Sciatic nerve (tissue), 2 donors: ENCODE measurements at regions of chr4 and their contacts with region 1.

Region 1: GRCh38 chr4:123198706-123199105 is 197.9 kb upstream of the SPRY1 start:
- DNase-seq: no peak
- ATAC-seq: no peak

Region 2: GRCh38 chr4:122334828-122335227 is 863.9 kb before region 1 on chr4:
- intact Hi-C with region 1: loop called (anchors 5 kb)
- DNase-seq: no peak
- ATAC-seq: no peak

Region 3: GRCh38 chr4:122617597-122618593 is 580.8 kb before region 1 on chr4:
- intact Hi-C with region 1: no loop called
- DNase-seq: no peak
- ATAC-seq: no peak

Region 4: GRCh38 chr4:122963216-122963615 is 235.5 kb before region 1 on chr4:
- intact Hi-C with region 1: no loop called
- DNase-seq: no peak
- ATAC-seq: no peak

Region 5: DNA sequence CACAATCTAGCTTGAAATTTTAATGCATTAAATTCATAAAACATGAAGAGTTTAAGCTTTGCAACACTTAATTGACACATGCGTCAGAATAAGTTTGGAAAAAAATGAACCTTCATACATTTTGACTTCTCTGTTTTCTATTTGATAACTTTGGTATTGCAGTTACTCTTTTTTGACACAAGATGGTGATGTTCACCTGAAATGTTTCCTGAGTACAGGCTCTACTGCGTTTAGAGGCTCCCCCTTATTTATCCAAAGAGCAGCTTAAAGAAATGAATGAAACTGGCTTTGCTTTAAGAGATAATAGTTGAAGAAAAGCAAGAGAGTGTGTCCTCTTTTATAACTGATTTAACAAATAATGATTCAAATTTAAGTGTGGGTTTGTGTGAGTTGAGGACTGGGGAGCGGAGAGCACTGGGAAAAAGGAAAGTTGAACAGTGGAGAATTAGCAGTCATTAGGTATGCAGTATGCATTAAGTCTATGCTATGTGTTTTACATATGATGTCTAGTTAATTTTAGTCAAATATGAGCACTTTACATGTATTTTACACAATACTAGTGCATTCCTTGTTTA is 95.7 kb before region 1 on chr4:
- intact Hi-C with region 1: no loop called
- DNase-seq: no peak
- ATAC-seq: peak; percentile 73

Region 6: GRCh38 chr4:123257591-123257990 is 58.9 kb after region 1 on chr4:
- intact Hi-C with region 1: loop called (anchors 2 kb)
- DNase-seq: no peak
- ATAC-seq: no peak